A673 (cell line): ENCODE measurements at regions of chr20 and their contacts with region 1.

Region 1: DNA sequence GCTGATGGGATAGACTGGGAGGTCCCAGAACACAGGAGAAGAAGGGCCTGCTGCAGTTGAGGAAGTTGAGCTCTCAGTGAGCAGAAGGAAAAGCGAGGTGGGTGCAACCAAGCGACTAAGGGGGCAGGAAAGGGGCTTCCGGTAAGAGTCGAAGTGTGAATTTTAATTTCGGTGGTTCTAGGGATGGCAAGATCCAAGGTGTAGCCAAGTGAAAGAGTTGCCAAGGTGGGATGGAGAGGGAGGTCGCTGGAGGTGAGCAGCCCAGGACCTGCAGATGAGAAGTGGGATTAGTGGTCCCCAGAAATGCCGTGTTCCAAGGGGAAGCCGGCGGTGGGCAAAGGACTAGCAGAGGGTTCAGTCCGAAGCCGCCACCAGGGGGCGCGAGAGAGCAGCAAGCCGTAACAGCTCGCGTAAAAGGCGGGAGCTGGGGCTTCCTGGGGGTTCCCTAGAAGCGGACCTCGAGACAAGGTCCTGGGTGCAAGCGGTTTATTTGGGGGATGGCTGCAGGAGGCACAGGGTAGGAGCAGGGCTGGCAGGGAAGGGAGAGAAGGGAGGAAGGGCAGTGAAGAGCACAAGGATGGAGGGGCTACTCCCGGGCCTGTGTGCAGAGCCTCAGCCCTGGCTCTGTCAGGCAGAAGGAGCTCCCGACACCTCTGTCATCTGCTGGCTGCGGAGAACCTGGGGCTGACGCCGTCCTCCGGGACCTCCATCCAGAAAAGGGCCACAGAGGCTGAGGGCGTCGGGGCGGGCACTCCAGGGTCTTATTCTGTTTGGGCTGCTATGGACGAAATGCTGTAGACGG is 103.6 kb downstream of the PAX1 start:
- DNase-seq: peak; percentile 51
- H3K4me3 ChIP-seq: no peak overlapping the region
- H3K27ac ChIP-seq: no peak overlapping the region
- H3K4me1 ChIP-seq: no peaks in the 10 kb centered on the region
- H3K27me3 ChIP-seq: peaks cover 24% of the 10 kb centered on the region
- CTCF ChIP-seq: peak; percentile 85

Region 2: GRCh38 chr20:21719592-21720214 is 89.4 kb before region 1 on chr20:
- CTCF ChIA-PET with region 1: no interaction called
- POLR2A ChIA-PET with region 1: no interaction called
- intact Hi-C with region 1: no loop called
- DNase-seq: peak; percentile 72
- H3K4me3 ChIP-seq: no peak overlapping the region
- H3K27ac ChIP-seq: no peak overlapping the region
- H3K4me1 ChIP-seq: no peaks in the 10 kb centered on the region
- H3K27me3 ChIP-seq: peaks cover 66% of the 10 kb centered on the region
- CTCF ChIP-seq: peak; percentile 90

Region 3: DNA sequence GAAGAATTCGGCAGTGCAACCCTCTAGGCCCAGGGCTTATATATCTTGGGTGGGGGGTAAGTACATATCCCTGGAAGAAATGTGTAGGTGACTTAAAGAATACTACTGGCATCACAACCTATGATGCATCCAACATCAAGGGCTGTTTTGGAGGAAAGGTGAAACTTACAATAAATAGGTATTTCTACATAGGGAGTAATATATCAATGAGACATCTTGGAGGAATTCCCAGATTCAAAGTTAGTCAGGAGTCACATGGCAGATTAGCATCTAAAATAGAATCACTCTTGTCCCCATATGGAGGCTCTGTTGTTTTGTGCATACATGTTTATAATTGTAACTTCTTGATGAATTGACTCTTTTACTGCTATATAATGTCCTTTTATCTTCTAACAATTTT is 271.9 kb after region 1 on chr20:
- CTCF ChIA-PET with region 1: no interaction called
- POLR2A ChIA-PET with region 1: no interaction called
- intact Hi-C with region 1: no loop called
- DNase-seq: no peak
- H3K4me3 ChIP-seq: no peak overlapping the region
- H3K27ac ChIP-seq: no peak overlapping the region
- H3K4me1 ChIP-seq: no peaks in the 10 kb centered on the region
- H3K27me3 ChIP-seq: no peaks in the 10 kb centered on the region
- CTCF ChIP-seq: no peak

Region 4: DNA sequence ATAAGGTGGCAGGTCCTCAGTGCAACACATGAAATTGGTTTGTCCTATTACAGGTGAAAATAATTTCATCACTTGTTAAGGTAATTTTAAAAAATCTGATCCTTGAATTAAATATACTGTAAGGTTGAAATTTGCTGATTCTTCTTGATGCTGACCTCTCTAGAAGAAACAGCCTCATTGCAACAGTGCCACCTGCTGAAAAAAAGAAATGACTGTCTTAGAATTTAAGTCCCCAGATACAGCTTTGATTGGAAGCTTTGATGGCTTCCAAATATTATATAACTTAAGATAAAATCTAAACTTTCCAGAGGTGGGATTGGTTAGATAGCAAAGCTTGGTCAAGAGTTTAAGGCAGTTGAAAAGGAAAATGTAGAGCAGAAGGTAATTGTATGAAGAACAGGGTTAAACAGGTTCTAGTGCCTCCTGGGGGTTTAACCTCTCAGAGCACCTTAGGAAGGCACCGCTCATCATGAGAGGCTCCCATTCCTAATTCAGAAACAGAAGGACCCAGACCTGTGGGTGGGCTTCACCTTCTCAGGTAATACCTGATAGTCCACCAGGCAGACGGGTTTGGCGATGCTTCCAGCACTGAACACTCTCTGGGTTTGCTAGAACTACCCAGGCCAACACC is 297.4 kb after region 1 on chr20:
- CTCF ChIA-PET with region 1: no interaction called
- POLR2A ChIA-PET with region 1: no interaction called
- intact Hi-C with region 1: loop called (anchors 2 kb)
- DNase-seq: peak; percentile 37
- H3K4me3 ChIP-seq: no peak overlapping the region
- H3K27ac ChIP-seq: no peak overlapping the region
- H3K4me1 ChIP-seq: no peaks in the 10 kb centered on the region
- H3K27me3 ChIP-seq: no peaks in the 10 kb centered on the region
- CTCF ChIP-seq: peak; percentile 60

Region 5: DNA sequence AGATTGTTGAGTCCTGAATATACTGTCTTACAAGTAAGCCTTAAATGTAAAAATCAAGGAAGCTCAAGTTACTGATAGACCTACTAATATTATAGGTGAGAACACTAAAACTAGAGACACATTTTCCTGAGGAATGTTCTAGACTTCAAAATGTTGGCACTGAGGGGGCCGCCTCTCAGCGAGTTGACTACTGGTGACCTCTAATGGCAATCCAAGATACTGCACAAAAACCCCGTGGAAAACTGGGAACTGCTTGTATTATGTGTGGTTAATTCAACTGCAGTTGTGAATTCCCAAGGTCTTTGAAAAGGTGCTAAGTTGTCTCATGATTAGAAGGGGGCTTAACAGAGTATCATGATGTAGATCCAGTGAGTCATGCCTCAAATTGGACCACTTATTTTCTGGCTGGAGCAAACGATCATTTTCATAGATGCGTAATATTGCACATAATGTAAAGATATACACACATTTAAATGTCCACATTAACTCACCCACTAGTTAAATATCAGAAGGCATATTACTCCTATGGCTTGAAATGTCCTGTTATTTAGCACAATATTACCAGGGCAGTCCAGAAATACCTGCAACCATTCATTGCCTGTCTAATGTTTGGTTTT is 439.1 kb after region 1 on chr20:
- CTCF ChIA-PET with region 1: no interaction called
- POLR2A ChIA-PET with region 1: no interaction called
- intact Hi-C with region 1: loop called (anchors 10 kb)
- DNase-seq: peak; percentile 29
- H3K4me3 ChIP-seq: no peak overlapping the region
- H3K27ac ChIP-seq: no peak overlapping the region
- H3K4me1 ChIP-seq: no peaks in the 10 kb centered on the region
- H3K27me3 ChIP-seq: peaks cover 4% of the 10 kb centered on the region
- CTCF ChIP-seq: peak; percentile 69